PC-3 (cell line): ENCODE measurements at regions of chr13 and their contacts with region 1.

Region 1: DNA sequence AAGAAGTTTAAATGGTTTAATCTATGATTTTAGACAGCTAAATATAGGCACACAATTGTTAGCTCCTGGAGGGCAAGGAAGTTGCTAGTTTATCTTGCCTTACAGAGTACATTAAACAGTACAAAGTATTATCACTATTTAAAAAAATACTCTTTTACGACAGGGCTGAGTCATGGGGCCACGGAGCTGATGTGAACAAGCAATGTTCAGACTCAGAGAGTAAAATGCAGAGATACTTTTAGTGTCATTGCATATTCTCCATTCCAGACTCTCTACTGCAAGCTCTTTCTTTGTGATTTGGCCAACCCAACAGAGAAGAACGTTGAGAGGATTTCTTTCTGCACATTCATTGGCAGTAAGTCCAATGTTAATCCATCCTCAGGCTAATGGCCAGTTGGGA is 352.4 kb downstream of the SPRY2 start:
- DNase-seq: peak; percentile 69
- ATAC-seq: peak; percentile 56
- H3K4me3 ChIP-seq: peak overlapping the region; percentile 42; the same call in 1 of the 2 replicates
- H3K27ac ChIP-seq: peak overlapping the region; percentile 100
- H3K4me1 ChIP-seq: peaks cover 43% of the 10 kb centered on the region
- H3K27me3 ChIP-seq: no peaks in the 10 kb centered on the region
- CTCF ChIP-seq: no peak

Region 2: GRCh38 chr13:80030491-80030890 is 41.9 kb after region 1 on chr13:
- CTCF ChIA-PET with region 1: no interaction called
- POLR2A ChIA-PET with region 1: no interaction called
- intact Hi-C with region 1: loop called (anchors 2 kb)
- DNase-seq: peak; percentile 88
- ATAC-seq: peak; percentile 98
- H3K4me3 ChIP-seq: no peak overlapping the region
- H3K27ac ChIP-seq: peak overlapping the region; percentile 69
- H3K4me1 ChIP-seq: peaks cover 23% of the 10 kb centered on the region
- H3K27me3 ChIP-seq: no peaks in the 10 kb centered on the region
- CTCF ChIP-seq: peak; percentile 64

Region 3: GRCh38 chr13:80040196-80040980 is 51.8 kb after region 1 on chr13:
- CTCF ChIA-PET with region 1: no interaction called
- POLR2A ChIA-PET with region 1: no interaction called
- intact Hi-C with region 1: loop called (anchors 1 kb)
- DNase-seq: peak; percentile 95
- ATAC-seq: peak; percentile 87
- H3K4me3 ChIP-seq: no peak overlapping the region
- H3K27ac ChIP-seq: peak overlapping the region; percentile 91
- H3K4me1 ChIP-seq: peaks cover 50% of the 10 kb centered on the region
- H3K27me3 ChIP-seq: no peaks in the 10 kb centered on the region
- CTCF ChIP-seq: no peak

Region 4: GRCh38 chr13:80214521-80214991 is 226.0 kb after region 1 on chr13:
- CTCF ChIA-PET with region 1: no interaction called
- POLR2A ChIA-PET with region 1: no interaction called
- intact Hi-C with region 1: no loop called
- DNase-seq: no peak
- ATAC-seq: no peak
- H3K4me3 ChIP-seq: no peak overlapping the region
- H3K27ac ChIP-seq: no peak overlapping the region
- H3K4me1 ChIP-seq: peaks cover 13% of the 10 kb centered on the region
- H3K27me3 ChIP-seq: no peaks in the 10 kb centered on the region
- CTCF ChIP-seq: no peak